ENCODE measurements at regions of chr2 and their contacts with region 1.

Region 1: DNA sequence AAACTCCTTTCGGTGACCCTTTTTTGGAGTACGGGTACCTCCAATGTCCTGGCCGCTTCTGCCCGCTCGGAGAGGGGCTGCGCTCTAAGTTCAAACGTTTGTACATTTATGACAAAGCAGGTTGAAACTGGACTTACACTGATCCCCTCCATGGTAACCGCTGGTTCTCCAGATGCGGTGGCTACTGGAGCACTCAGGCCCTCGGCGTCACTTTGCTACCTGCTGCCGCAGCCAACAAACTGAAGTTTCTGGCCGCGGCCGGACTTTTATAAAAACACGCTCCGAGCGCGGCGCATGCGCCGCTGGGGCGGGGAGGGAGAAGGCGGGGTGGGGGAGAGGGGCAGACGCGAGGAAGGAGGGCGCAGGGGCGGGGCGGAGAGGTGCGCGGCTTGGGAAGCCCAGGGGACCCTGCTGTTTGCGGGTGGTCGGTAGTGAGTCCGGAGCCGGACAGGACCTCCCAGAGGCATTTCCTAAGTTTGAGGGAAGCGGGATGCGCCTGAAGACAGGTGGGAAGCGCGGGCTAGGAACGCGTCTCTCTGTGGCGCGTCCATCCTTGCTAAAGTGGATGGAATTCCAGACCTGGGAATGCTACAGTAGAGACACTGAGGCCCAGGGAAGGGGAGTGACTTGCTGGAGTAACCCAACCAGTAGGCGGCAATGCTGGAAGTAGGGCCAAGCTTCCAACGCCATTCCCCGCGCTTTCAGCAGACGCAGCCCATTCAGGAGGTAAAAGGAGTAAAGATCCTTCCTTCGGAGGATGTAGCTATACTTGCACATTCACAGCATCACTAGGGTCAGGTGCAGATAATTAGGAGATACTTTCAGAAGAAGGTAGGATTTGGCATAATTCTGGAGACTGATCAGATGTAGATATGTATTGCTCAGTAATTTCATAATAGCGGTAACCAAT is at the start of gene CXCR4:
- DNase-seq: peak; percentile 94
- ATAC-seq: peak; percentile 55
- H3K4me3 ChIP-seq: peak within 1 kb of the TSS; percentile 93 to 100 (median 98)
- H3K4me3 Mint-ChIP-seq: peak within 1 kb of the TSS; percentile 98
- H3K27ac ChIP-seq: peak within 1 kb of the TSS; percentile 96 to 99
- H3K27ac Mint-ChIP-seq: peak within 1 kb of the TSS; percentile 100
- H3K4me1 ChIP-seq: peaks cover 48 to 52% of the 10 kb centered on the region in 2 donors
- H3K4me1 Mint-ChIP-seq: peaks cover 59% of the 10 kb centered on the region
- H3K27me3 ChIP-seq: no peaks in the 10 kb centered on the region
- H3K27me3 Mint-ChIP-seq: no peaks in the 10 kb centered on the region
- CTCF ChIP-seq: no peak
- total RNA-seq, gene CXCR4: 2,047 and 2,119 TPM in 2 replicates

Region 2: GRCh38 chr2:135775420-135775819 is 342.7 kb before region 1 on chr2:
- CTCF ChIA-PET with region 1: no interaction called
- POLR2A ChIA-PET with region 1: no interaction called
- intact Hi-C with region 1: no loop called
- DNase-seq: no peak
- ATAC-seq: no peak
- H3K4me3 ChIP-seq: no peak overlapping the region
- H3K4me3 Mint-ChIP-seq: no peak overlapping the region
- H3K27ac ChIP-seq: no peak overlapping the region
- H3K27ac Mint-ChIP-seq: no peak overlapping the region
- H3K4me1 ChIP-seq: no peaks in the 10 kb centered on the region
- H3K4me1 Mint-ChIP-seq: no peaks in the 10 kb centered on the region
- H3K27me3 ChIP-seq: no peaks in the 10 kb centered on the region
- H3K27me3 Mint-ChIP-seq: no peaks in the 10 kb centered on the region
- CTCF ChIP-seq: no peak

Region 3: DNA sequence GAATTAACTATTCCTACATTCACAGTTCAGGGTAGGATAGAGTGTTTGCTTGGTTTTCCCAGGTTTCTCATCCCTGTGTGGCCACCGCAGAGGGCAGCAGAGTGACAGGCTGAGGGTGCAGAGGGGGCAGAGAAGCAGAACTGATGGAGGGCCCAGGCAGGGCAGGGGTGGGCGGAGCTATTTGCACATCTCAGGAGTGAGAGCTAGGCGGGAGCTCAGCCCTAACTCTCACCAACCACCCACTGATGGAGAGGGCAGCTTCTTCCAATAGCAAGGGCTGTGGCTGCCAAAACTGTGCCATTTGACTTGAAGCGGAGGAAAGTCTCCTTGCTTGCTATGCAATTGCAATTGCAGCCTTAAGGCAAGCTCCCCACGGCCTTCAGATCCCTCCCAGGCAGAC is 120.8 kb before region 1 on chr2:
- CTCF ChIA-PET with region 1: interaction called, 22 read pairs
- POLR2A ChIA-PET with region 1: interaction called, 15 read pairs
- intact Hi-C with region 1: no loop called
- DNase-seq: peak; percentile 83
- ATAC-seq: peak; percentile 95
- H3K4me3 ChIP-seq: peak overlapping the region in 3 of 5 experiments; percentile 8 to 17 (median 10)
- H3K4me3 Mint-ChIP-seq: peak overlapping the region; percentile 74
- H3K27ac ChIP-seq: peak overlapping the region; percentile 47 to 50
- H3K27ac Mint-ChIP-seq: peak overlapping the region; percentile 79
- H3K4me1 ChIP-seq: peaks cover 52 to 57% of the 10 kb centered on the region in 2 donors
- H3K4me1 Mint-ChIP-seq: peaks cover 51% of the 10 kb centered on the region
- H3K27me3 ChIP-seq: no peaks in the 10 kb centered on the region
- H3K27me3 Mint-ChIP-seq: no peaks in the 10 kb centered on the region
- CTCF ChIP-seq: peak; percentile 26

Region 4: GRCh38 chr2:136135921-136136906 is 18.1 kb after region 1 on chr2:
- CTCF ChIA-PET with region 1: interaction called, 37 read pairs
- POLR2A ChIA-PET with region 1: interaction called, 405 read pairs
- intact Hi-C with region 1: loop called (anchors 1 kb)
- DNase-seq: peak; percentile 94
- ATAC-seq: peak; percentile 50
- H3K4me3 ChIP-seq: peak overlapping the region in 3 of 5 experiments; percentile 10 to 33 (median 10)
- H3K4me3 Mint-ChIP-seq: peak overlapping the region; percentile 83
- H3K27ac ChIP-seq: peak overlapping the region; percentile 98 to 99
- H3K27ac Mint-ChIP-seq: peak overlapping the region; percentile 96
- H3K4me1 ChIP-seq: peaks cover 94 to 98% of the 10 kb centered on the region in 2 donors
- H3K4me1 Mint-ChIP-seq: peaks cover 92% of the 10 kb centered on the region
- H3K27me3 ChIP-seq: no peaks in the 10 kb centered on the region
- H3K27me3 Mint-ChIP-seq: no peaks in the 10 kb centered on the region
- CTCF ChIP-seq: no peak

Region 5: DNA sequence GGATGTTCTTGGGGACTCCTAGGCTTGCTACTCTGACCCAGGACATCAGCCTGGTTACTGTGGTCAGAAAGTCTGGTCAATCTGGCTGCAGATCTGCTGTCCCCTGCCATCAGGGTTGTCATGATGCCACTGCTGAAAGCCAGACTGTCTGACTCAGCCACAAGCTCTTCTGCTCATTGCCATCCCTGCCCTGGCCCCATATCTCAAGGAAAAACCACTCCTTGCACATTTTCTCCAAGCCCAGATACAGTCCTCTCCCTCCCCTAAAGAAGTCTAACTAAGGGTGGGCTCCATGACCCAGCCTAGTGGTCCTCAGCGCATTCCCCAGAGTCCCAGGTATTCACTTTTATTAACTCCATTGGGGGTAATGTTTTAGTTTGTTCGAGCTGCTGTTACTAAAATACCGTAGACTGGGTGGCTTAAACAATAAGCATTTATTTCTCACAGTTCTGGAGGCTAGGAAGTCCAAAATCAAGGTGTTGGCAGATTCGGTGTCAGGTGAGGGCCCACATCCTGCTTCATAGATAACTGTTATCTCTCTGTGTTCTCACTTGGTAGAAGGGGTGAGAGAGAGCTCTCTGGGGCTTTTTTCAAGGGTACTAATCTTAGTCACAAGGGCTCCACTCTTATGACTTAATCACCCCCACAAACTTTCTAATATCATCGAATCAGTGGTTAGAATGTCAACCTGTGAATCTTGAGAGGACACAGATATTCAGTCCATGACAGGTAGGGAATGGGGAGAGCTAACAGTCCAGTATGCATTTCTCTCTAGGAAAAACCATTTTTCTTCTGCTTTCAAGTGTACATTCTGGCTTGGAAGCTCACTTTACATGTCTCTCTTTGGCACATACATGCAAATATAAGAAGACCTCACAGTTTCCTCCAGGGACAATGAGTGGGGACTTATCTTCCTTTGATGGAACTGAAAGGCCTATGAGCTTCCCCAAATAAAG is 94.5 kb after region 1 on chr2:
- CTCF ChIA-PET with region 1: interaction called, 22 read pairs
- POLR2A ChIA-PET with region 1: interaction called, 112 read pairs
- intact Hi-C with region 1: loop called (anchors 1 kb)
- DNase-seq: peak; percentile 81
- ATAC-seq: peak; percentile 74
- H3K4me3 ChIP-seq: no peak overlapping the region
- H3K4me3 Mint-ChIP-seq: peak overlapping the region; percentile 74
- H3K27ac ChIP-seq: peak overlapping the region; percentile 53 to 99
- H3K27ac Mint-ChIP-seq: peak overlapping the region; percentile 81
- H3K4me1 ChIP-seq: peaks cover 80 to 81% of the 10 kb centered on the region in 2 donors
- H3K4me1 Mint-ChIP-seq: peaks cover 96% of the 10 kb centered on the region
- H3K27me3 ChIP-seq: no peaks in the 10 kb centered on the region
- H3K27me3 Mint-ChIP-seq: no peaks in the 10 kb centered on the region
- CTCF ChIP-seq: no peak

Region 6: GRCh38 chr2:136327162-136327852 is 209.1 kb after region 1 on chr2:
- CTCF ChIA-PET with region 1: no interaction called
- POLR2A ChIA-PET with region 1: no interaction called
- intact Hi-C with region 1: loop called (anchors 5 kb)
- DNase-seq: peak; percentile 53
- ATAC-seq: peak; percentile 75
- H3K4me3 ChIP-seq: peak overlapping the region in 4 of 5 experiments; percentile 6 to 32 (median 16)
- H3K4me3 Mint-ChIP-seq: peak overlapping the region; percentile 69
- H3K27ac ChIP-seq: peak overlapping the region; percentile 66
- H3K27ac Mint-ChIP-seq: peak overlapping the region; percentile 88
- H3K4me1 ChIP-seq: peaks cover 33 to 48% of the 10 kb centered on the region in 2 donors
- H3K4me1 Mint-ChIP-seq: peaks cover 57% of the 10 kb centered on the region
- H3K27me3 ChIP-seq: no peaks in the 10 kb centered on the region
- H3K27me3 Mint-ChIP-seq: no peaks in the 10 kb centered on the region
- CTCF ChIP-seq: no peak